Mucosa of descending colon (tissue), 3 donors: ENCODE measurements at regions of chr16 and their contacts with region 1.

Region 1: GRCh38 chr16:25045696-25046381 is 30.7 kb upstream of the ARHGAP17 start:
- DNase-seq: no peak
- ATAC-seq: no peak
- H3K4me3 ChIP-seq: no peak overlapping the region
- H3K4me1 ChIP-seq: peaks cover 10% of the 10 kb centered on the region
- CTCF ChIP-seq: no peak

Region 2: GRCh38 chr16:24834459-24835335 is 211.1 kb before region 1 on chr16:
- intact Hi-C with region 1: loop called in 1 of 2 experiments (anchors 10 kb)
- DNase-seq: peak; percentile 72 to 86 (median 85)
- ATAC-seq: peak; percentile 94
- H3K4me3 ChIP-seq: no peak overlapping the region
- H3K4me1 ChIP-seq: peaks cover 4% of the 10 kb centered on the region
- CTCF ChIP-seq: peak; percentile 43

Region 3: GRCh38 chr16:25481646-25482045 is 435.8 kb after region 1 on chr16:
- intact Hi-C with region 1: no loop called
- DNase-seq: no peak
- ATAC-seq: no peak
- H3K4me3 ChIP-seq: no peak overlapping the region
- H3K4me1 ChIP-seq: no peaks in the 10 kb centered on the region
- CTCF ChIP-seq: no peak